Gastrocnemius medialis (tissue), 4 donors: ENCODE measurements at regions of chr15 and their contacts with region 1.

Region 1: DNA sequence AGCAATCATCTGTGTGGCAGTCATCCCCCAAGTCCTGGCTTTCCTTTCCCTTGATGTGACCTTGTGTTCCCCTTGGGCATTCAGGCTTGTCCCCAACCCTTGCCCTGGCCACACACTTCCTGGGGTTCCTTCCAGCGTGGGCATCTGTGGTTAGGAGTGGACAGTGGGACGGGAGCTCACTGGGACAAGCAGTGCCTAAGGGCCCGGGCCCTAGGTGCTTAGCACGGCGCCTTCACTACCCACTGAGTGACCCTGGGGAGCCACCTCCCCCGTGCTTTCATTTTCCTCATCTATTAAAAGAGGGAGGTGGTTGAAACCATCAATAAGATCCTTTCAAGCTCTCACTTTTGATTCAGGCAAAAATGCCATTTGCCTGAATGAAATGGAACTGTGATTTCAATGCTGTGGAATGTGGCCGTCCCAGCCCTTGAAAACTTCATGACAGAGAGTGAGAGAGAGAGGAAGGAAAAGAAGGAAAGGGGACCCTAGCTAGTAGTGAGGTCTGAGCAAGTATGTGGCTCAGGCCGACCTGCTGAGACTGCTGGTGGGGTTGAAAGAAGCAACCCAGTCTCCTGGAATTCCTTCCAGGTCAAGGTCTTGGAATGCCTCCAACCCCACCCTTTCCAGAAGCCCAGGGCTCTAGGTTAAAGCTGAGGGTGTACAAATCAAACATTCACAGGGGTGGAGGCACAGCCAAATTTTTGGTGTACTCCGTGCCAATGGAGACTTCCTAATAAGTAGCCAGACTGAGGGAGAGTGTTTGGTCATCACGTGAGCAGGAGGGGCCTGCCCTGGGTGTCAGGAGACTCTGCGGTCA is 302.9 kb downstream of the TLE3 start:
- DNase-seq: peak; percentile 33 to 42
- ATAC-seq: no peak
- H3K4me3 ChIP-seq: no peak overlapping the region
- H3K27ac ChIP-seq: peak overlapping the region; percentile 46 to 68 (median 60)
- H3K4me1 ChIP-seq: peaks cover 29 to 39% of the 10 kb centered on the region in 2 donors
- H3K27me3 ChIP-seq: no peaks in the 10 kb centered on the region
- CTCF ChIP-seq: no peak
- POLR2A ChIP-seq: no peak

Region 2: DNA sequence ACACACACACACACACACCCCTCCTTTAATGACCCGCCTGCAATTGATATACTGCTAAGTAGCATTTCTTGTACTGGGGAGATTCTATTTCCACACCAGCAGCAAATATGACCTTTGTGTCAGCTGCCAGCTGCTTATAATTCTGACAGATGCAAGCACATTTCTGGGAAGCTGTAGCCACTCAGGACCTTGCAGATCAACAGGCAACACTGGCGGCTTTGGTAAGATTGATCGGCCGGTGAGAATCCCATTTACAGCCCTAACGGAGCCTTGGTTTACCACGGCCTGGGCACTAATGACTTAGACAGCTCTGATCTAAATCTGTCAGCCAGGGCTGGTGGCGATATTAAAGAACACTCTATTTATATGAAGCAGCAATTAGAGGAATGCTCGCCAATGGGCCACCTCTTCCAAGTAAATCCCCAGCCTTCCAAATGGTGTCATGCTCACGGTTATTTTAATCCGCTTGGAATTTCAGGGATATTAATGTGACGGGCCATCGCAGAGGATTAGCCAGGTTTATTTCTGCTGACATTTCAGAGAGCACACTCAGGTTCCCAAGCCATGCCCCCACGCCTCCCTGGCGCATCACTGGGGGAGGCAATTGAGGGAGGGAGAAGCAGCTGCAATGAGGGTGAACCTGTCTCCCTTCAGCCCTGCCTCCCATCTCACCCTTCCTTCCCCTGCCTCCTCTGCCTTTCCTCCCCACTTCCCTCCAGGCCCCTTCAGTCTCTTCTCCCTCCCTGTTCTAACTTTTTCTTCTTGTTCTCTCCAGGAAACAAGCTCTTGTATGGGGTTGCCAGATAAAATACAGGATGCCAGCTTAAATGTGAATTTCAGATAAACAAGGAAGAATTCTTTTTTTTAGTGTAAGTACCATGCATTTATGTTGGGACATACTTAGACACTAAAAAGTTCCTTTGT is 15.8 kb after region 1 on chr15:
- in situ Hi-C with region 1: no loop called
- intact Hi-C with region 1: loop called (anchors 1 kb)
- DNase-seq: peak; percentile 59 to 68
- ATAC-seq: peak; percentile 62 to 80
- H3K4me3 ChIP-seq: peak overlapping the region in 1 of 4 donors; percentile 6
- H3K27ac ChIP-seq: peak overlapping the region; percentile 80 to 87 (median 82)
- H3K4me1 ChIP-seq: peaks cover 16 to 19% of the 10 kb centered on the region in 2 donors
- H3K27me3 ChIP-seq: no peaks in the 10 kb centered on the region
- CTCF ChIP-seq: no peak
- POLR2A ChIP-seq: no peak

Region 3: GRCh38 chr15:69893863-69894262 is 99.0 kb after region 1 on chr15:
- in situ Hi-C with region 1: no loop called
- intact Hi-C with region 1: loop called (anchors 2 kb)
- DNase-seq: peak; percentile 43 to 79
- ATAC-seq: peak; percentile 94 to 96
- H3K4me3 ChIP-seq: no peak overlapping the region
- H3K27ac ChIP-seq: no peak overlapping the region
- H3K4me1 ChIP-seq: peaks cover 13 to 14% of the 10 kb centered on the region in 2 donors
- H3K27me3 ChIP-seq: no peaks in the 10 kb centered on the region
- CTCF ChIP-seq: no peak
- POLR2A ChIP-seq: no peak